Right cardiac atrium (tissue), 5 donors: ENCODE measurements at regions of chr5 and their contacts with region 1.

Region 1: DNA sequence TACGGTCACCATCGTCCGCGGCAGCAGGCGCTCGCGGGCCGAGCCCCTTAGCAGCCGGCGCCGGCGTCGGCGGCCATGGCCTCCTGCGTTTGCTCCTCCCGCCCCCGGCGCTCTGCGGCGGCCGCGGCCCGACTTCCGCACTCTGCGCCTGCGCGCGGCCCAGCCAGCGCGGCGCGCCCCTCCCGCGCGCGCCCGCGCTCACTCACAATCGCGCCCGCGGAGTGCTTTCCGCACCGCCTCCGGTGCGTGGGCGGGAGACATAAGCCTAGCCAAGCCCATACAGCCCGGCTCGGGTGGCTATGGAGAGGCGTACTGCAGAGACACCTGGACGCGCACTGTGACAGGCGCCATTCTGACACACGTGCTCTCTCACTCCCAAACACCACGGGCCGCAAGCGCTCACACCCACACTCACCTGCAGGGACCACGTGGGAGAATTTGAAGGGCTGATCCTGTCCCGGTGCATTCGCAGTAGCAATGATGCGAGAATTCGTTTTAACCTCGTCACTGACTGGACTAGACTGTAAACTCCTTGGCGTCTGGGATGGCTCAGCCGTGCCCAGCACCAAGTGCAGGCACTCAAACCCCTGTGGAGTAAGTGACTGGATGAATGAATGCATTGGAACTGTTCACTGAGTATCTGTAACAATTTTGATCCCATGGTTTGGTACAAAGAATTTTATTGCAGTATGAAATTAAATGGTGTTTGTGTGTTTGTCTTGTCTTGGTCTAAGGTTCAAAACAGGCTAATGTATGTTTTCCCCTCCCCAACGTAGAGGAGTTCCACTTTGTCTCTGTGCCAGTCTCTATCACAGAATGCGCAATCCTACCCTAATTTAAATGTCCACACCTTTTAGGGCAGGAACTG is at the start of gene RNF145:
- DNase-seq: peak; percentile 91 to 96 (median 95)
- ATAC-seq: peak; percentile 87 to 88
- H3K4me3 ChIP-seq: peak within 1 kb of the TSS; percentile 99
- H3K27ac ChIP-seq: peak within 1 kb of the TSS; percentile 97
- H3K4me1 ChIP-seq: no peaks in the 10 kb centered on the region
- H3K27me3 ChIP-seq: no peaks in the 10 kb centered on the region
- total RNA-seq, gene RNF145: 26.3 to 31.9 (median 28.0) TPM

Region 2: DNA sequence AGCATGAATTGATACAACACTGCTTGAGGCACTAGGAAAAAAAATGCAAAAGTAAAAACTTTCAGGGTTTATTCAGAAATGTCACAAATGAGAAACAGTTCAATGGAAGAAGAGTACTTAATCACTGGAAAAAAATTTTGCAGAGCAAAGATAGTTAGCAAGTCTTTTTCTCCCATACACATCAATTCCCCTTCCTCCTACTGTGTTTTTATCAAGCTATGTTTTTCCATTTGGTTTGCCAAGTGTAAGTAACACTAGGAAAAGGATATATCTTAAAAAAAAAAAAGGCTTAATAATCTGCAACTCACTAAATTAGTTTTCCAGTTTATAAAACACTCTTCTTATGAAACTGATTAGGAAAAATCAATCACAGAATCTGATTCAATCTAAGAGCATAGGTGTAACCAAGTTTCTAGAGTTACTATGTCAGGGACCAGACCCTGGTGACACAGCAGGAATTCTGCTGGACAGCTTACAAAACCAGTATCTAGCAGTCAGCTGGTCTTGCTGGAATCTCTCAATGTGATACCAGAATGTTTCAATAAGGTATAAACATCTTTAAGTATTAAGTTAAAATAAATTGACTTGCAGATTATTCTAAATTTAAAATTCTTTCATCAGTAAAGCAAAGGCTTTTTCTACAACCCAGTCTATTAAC is 35.0 kb before region 1 on chr5:
- intact Hi-C with region 1: loop called in 1 of 4 experiments (anchors 5 kb)
- DNase-seq: no peak
- ATAC-seq: peak; percentile 64 to 72
- H3K4me3 ChIP-seq: no peak overlapping the region
- H3K27ac ChIP-seq: no peak overlapping the region
- H3K4me1 ChIP-seq: peaks cover 6% of the 10 kb centered on the region
- H3K27me3 ChIP-seq: no peaks in the 10 kb centered on the region

Region 3: GRCh38 chr5:159262859-159263567 is 53.3 kb after region 1 on chr5 and contains the start of gene UBLCP1:
- intact Hi-C with region 1: loop called in 1 of 4 experiments (anchors 5 kb)
- DNase-seq: peak; percentile 81 to 91 (median 90)
- ATAC-seq: peak; percentile 95
- H3K4me3 ChIP-seq: peak within 1 kb of the TSS; percentile 70
- H3K27ac ChIP-seq: peak within 1 kb of the TSS; percentile 78
- H3K4me1 ChIP-seq: no peaks in the 10 kb centered on the region
- H3K27me3 ChIP-seq: no peaks in the 10 kb centered on the region
- total RNA-seq, gene UBLCP1: 14.9 to 19.9 (median 17.1) TPM